ENCODE measurements at regions of chr4 and their contacts with region 1.

Region 1: DNA sequence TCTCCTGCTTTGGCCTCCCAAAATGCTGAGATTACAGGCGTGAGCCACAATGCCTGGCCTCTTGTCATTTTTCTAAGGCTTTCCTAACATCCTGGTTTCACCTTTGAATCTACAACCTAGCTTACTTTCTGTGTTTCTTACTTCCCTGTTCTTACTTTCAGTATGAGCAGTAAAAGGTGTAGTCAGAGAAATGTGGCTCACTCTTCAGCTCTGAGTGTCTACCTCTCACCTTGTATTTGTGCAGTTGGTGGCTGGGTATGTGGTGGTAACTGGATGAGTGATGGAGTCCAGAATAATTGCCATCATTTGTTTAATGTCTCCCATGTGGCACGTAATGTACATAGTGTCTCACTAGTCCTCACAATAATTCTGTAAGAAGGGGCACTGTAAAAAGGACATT is 19.1 kb upstream of the CXCL11 start:
- DNase-seq: peak; percentile 74
- ATAC-seq: peak; percentile 98
- H3K4me3 ChIP-seq: no peak overlapping the region; the same call in 1 of the 2 replicates
- H3K27ac ChIP-seq: no peak overlapping the region
- H3K4me1 ChIP-seq: peaks cover 29% of the 10 kb centered on the region
- H3K27me3 ChIP-seq: peaks cover 0 to 2% of the 10 kb centered on the region in 2 experiments; a peak in 2 of 4 replicates
- CTCF ChIP-seq: no peak
- EP300 ChIP-seq: peak; percentile 26 to 85; a peak in 2 of 4 replicates
- POLR2A ChIP-seq: no peak
- RAD21 ChIP-seq: 0 out of 2 replicates have a peak, but pooled peaks have one; percentile 10

Region 2: GRCh38 chr4:76023389-76023788 is 31.6 kb before region 1 on chr4 and contains the start of gene CXCL10:
- CTCF ChIA-PET with region 1: interaction called, 8 read pairs
- POLR2A ChIA-PET with region 1: interaction called, 5 read pairs
- RAD21 ChIA-PET with region 1: interaction called, 9 read pairs
- SMC1A ChIA-PET with region 1: interaction called, 11 read pairs
- in situ Hi-C with region 1: no loop called
- intact Hi-C with region 1: no loop called
- DNase-seq: no peak
- ATAC-seq: 0 out of 3 replicates have a peak, but pooled peaks have one; percentile 28
- H3K4me3 ChIP-seq: no peak within 1 kb of the TSS
- H3K27ac ChIP-seq: no peak within 1 kb of the TSS
- H3K4me1 ChIP-seq: peaks cover 4% of the 10 kb centered on the region; the same call in 1 of the 2 replicates
- H3K27me3 ChIP-seq: no peaks in the 10 kb centered on the region; a peak in 1 of 4 replicates
- CTCF ChIP-seq: no peak
- EP300 ChIP-seq: no peak
- POLR2A ChIP-seq: no peak
- RAD21 ChIP-seq: no peak
- polyA plus RNA-seq, gene CXCL10: 7.7 to 10.4 TPM

Region 3: GRCh38 chr4:76035141-76035540 is 19.9 kb before region 1 on chr4:
- CTCF ChIA-PET with region 1: interaction called, 11 read pairs
- POLR2A ChIA-PET with region 1: no interaction called
- RAD21 ChIA-PET with region 1: interaction called, 3 read pairs
- SMC1A ChIA-PET with region 1: interaction called, 11 read pairs
- in situ Hi-C with region 1: no loop called
- intact Hi-C with region 1: no loop called
- DNase-seq: no peak
- ATAC-seq: peak; percentile 50
- H3K4me3 ChIP-seq: no peak overlapping the region
- H3K27ac ChIP-seq: no peak overlapping the region
- H3K4me1 ChIP-seq: no peaks in the 10 kb centered on the region
- H3K27me3 ChIP-seq: no peaks in the 10 kb centered on the region; a peak in 1 of 4 replicates
- CTCF ChIP-seq: no peak
- EP300 ChIP-seq: no peak
- POLR2A ChIP-seq: no peak
- RAD21 ChIP-seq: no peak